ENCODE measurements at regions of chr18 and their contacts with region 1.

Region 1: DNA sequence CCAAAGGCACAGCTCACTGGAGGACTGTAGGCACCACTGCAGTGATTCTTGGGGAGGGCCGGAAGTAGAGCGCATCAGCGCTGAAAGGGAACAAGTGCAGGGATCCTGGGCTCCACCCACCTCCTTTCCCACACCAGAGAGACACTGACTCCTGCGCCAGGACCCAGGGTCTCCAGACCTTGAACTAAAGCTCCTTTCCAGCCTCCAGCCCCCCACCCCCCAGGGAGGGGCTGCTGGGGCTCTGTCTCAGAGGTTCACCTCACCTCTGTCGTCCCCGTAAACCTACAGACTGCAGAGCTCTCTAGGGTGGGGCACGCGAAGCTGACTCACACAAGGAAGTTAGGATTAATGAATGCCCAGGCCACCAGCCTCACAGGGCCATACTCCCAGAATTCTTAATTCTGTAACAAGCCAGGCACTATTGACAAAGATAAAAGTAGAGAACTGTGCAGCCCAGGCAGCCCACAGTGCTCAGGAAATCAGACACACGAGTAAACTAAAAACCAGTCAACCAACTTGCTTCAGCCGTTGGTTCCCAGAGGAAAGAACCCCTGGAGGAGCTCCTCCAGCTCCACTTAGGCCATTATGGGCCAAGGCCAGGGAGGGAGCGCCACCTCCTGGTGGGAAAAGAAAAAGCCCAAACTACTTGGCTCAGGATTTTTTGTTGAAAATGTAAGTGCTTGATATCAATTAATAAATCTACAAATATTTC is 45.1 kb upstream of the ACAA2 start:
- DNase-seq: peak; percentile 41
- H3K4me3 Mint-ChIP-seq: no peak overlapping the region
- H3K27ac Mint-ChIP-seq: no peak overlapping the region
- H3K4me1 Mint-ChIP-seq: no peaks in the 10 kb centered on the region
- H3K27me3 Mint-ChIP-seq: no peaks in the 10 kb centered on the region

Region 2: DNA sequence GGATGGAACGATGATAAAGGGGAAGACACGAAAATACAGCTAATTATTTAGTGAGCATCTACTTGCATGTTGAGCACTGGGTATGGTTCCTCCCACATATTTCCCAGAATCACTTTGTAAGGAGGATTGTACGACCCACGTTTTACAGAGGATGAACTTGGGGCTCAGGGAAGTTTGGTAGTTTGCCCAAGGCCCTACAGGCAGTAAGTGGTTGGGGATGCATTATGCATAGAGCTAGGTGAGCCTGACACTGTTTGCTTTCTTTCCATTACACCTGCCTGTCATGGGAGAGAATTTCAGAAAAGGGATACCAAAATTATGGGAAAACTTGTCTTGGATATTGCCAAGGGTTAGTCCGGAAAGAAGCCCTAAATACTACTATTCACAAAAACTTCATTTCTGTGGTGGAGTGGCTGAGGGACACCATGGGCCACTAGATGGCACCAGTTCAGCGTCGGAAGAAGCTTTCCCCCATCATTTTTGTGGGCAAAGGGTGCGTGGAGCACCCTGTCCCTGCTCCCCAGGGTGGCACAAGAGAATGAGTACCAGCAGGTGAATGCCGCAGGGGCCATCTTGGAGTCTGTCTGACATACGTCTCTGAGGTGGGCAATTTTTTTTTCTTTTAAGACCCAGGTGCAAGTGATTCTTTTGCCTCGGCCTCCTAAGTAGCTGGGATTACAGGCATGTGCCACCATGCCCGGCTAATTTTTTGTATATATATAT is 347.9 kb before region 1 on chr18:
- intact Hi-C with region 1: loop called (anchors 1 kb)
- DNase-seq: peak; percentile 16
- H3K4me3 Mint-ChIP-seq: no peak overlapping the region
- H3K27ac Mint-ChIP-seq: no peak overlapping the region
- H3K4me1 Mint-ChIP-seq: no peaks in the 10 kb centered on the region
- H3K27me3 Mint-ChIP-seq: peaks cover 14% of the 10 kb centered on the region

Region 3: GRCh38 chr18:49561289-49562193 is 296.9 kb before region 1 on chr18 and contains the start of gene LIPG:
- intact Hi-C with region 1: loop called (anchors 1 kb)
- DNase-seq: peak; percentile 43
- H3K4me3 Mint-ChIP-seq: peak within 1 kb of the TSS; percentile 63
- H3K27ac Mint-ChIP-seq: no peak within 1 kb of the TSS
- H3K4me1 Mint-ChIP-seq: peaks cover 26% of the 10 kb centered on the region
- H3K27me3 Mint-ChIP-seq: peaks cover 71% of the 10 kb centered on the region
- total RNA-seq, gene LIPG: 0.53 and 0.59 TPM in 2 replicates

Region 4: DNA sequence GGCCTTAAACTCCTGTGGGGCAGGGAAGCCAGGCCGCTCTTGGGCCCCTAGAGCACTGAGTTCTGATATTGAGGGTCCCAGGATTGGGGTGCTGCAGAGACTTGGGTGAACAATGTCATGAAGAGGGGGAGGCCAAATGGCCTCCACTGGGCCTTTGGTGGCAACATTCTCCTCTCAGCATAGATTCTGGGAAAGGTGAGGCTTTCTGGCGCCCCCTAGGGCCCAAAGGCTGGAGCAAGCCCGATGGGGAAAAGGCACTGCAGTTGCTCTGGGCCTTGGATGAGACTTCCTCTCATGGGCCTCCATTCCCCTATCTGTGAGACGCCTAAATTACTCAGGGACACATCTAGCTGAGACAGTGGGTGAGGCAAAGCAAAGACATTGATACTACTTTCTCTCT is 129.9 kb before region 1 on chr18:
- intact Hi-C with region 1: loop called (anchors 5 kb)
- DNase-seq: peak; percentile 14
- H3K4me3 Mint-ChIP-seq: no peak overlapping the region
- H3K27ac Mint-ChIP-seq: no peak overlapping the region
- H3K4me1 Mint-ChIP-seq: peaks cover 6% of the 10 kb centered on the region
- H3K27me3 Mint-ChIP-seq: peaks cover 9% of the 10 kb centered on the region

Region 5: GRCh38 chr18:49768051-49768391 is 90.4 kb before region 1 on chr18:
- intact Hi-C with region 1: loop called (anchors 5 kb)
- DNase-seq: no peak
- H3K4me3 Mint-ChIP-seq: no peak overlapping the region
- H3K27ac Mint-ChIP-seq: no peak overlapping the region
- H3K4me1 Mint-ChIP-seq: no peaks in the 10 kb centered on the region
- H3K27me3 Mint-ChIP-seq: peaks cover 8% of the 10 kb centered on the region

Region 6: GRCh38 chr18:49784427-49785185 is 73.9 kb before region 1 on chr18:
- intact Hi-C with region 1: loop called (anchors 5 kb)
- DNase-seq: no peak
- H3K4me3 Mint-ChIP-seq: no peak overlapping the region
- H3K27ac Mint-ChIP-seq: no peak overlapping the region
- H3K4me1 Mint-ChIP-seq: peaks cover 34% of the 10 kb centered on the region
- H3K27me3 Mint-ChIP-seq: no peaks in the 10 kb centered on the region

Region 7: GRCh38 chr18:49813319-49814146 is 44.9 kb before region 1 on chr18 and contains the start of gene ACAA2:
- intact Hi-C with region 1: loop called (anchors 1 kb)
- DNase-seq: peak; percentile 76
- H3K4me3 Mint-ChIP-seq: peak within 1 kb of the TSS; percentile 89
- H3K27ac Mint-ChIP-seq: peak within 1 kb of the TSS; percentile 98
- H3K4me1 Mint-ChIP-seq: peaks cover 53% of the 10 kb centered on the region
- H3K27me3 Mint-ChIP-seq: no peaks in the 10 kb centered on the region
- total RNA-seq, gene ACAA2: 82.9 and 85.7 TPM in 2 replicates

Region 8: DNA sequence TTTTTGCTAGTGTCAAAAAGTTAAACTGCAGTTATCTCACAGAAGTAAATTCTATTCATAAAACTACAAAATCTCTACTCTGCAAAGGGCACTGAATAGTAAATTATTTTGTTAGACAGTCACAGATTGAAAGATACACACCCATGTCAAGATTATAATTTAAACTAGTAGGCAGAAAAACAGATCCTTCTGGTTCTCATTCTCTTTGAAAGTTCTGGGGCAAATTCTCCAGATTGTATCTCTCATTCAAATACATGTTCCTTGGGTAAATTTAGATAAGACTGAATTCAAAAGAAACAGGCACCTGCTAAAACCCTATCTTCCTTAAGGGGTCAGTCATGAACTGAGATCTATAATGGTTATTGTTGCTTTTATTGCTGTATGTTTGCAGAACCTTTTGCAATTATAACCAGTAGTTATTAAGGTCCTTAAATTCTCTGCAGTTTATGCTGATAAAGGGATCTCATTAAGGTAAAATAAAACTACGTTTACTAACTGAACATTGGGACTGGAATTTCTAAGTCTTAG is 252.9 kb after region 1 on chr18:
- intact Hi-C with region 1: no loop called
- DNase-seq: no peak
- H3K4me3 Mint-ChIP-seq: no peak overlapping the region
- H3K27ac Mint-ChIP-seq: no peak overlapping the region
- H3K4me1 Mint-ChIP-seq: no peaks in the 10 kb centered on the region
- H3K27me3 Mint-ChIP-seq: peaks cover 21% of the 10 kb centered on the region

Measured in activated T-helper 2 cell treated with anti-CD3 and anti-CD28 coated beads, Interferon-gamma antibody, Interleukin-2, Interleukin-4, amounts not matched to agents 10 μg/mL and 5 μg/mL and 100 μg/mL, durations not matched to agents 14 hours and 24 hours and 36 hours (primary cell).